Caco-2 (cell line): ENCODE measurements at regions of chr13 and their contacts with region 1.

Region 1: DNA sequence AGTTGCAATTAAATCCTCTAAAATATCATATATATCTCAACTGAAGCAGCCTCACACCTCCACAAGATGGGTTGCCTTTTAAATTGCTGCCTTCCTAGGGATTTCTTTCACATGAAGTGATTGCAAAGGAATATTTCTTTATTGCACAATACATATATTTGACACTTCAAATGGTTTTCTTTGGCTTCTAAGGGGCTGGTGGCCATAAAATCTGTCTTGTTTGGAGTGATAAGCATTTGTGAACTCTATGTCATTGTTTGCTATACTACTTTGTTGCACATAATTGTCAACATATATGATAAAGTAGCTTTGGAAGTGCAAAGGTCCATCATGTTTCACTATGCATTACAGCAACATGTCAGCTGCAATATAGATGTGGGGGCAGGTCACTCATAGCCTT is 2380.9 kb downstream of the PCDH9 start:
- DNase-seq: peak; percentile 69 to 70
- H3K4me3 ChIP-seq: no peak overlapping the region
- H3K4me3 Mint-ChIP-seq: no peak overlapping the region
- H3K27ac Mint-ChIP-seq: no peak overlapping the region
- H3K4me1 ChIP-seq: peaks cover 32% of the 10 kb centered on the region
- H3K4me1 Mint-ChIP-seq: peaks cover 34% of the 10 kb centered on the region
- H3K27me3 ChIP-seq: no peaks in the 10 kb centered on the region
- H3K27me3 Mint-ChIP-seq: no peaks in the 10 kb centered on the region
- CTCF ChIP-seq: no peak

Region 2: GRCh38 chr13:64675299-64675818 is 173.8 kb before region 1 on chr13:
- CTCF ChIA-PET with region 1: no interaction called
- POLR2A ChIA-PET with region 1: no interaction called
- intact Hi-C with region 1: loop called (anchors 1 kb)
- DNase-seq: peak in 1 of 2 experiments; percentile 64
- H3K4me3 ChIP-seq: no peak overlapping the region
- H3K4me3 Mint-ChIP-seq: peak overlapping the region; percentile 65
- H3K27ac Mint-ChIP-seq: peak overlapping the region; percentile 94
- H3K4me1 ChIP-seq: peaks cover 21% of the 10 kb centered on the region
- H3K4me1 Mint-ChIP-seq: peaks cover 17% of the 10 kb centered on the region
- H3K27me3 ChIP-seq: no peaks in the 10 kb centered on the region
- H3K27me3 Mint-ChIP-seq: no peaks in the 10 kb centered on the region
- CTCF ChIP-seq: no peak

Region 3: GRCh38 chr13:64723724-64724123 is 125.5 kb before region 1 on chr13:
- CTCF ChIA-PET with region 1: no interaction called
- POLR2A ChIA-PET with region 1: no interaction called
- intact Hi-C with region 1: loop called (anchors 2 kb)
- DNase-seq: peak; percentile 65 to 70
- H3K4me3 ChIP-seq: no peak overlapping the region
- H3K4me3 Mint-ChIP-seq: peak overlapping the region; percentile 48
- H3K27ac Mint-ChIP-seq: peak overlapping the region; percentile 71
- H3K4me1 ChIP-seq: peaks cover 15% of the 10 kb centered on the region
- H3K4me1 Mint-ChIP-seq: peaks cover 29% of the 10 kb centered on the region
- H3K27me3 ChIP-seq: no peaks in the 10 kb centered on the region
- H3K27me3 Mint-ChIP-seq: no peaks in the 10 kb centered on the region
- CTCF ChIP-seq: no peak

Region 4: DNA sequence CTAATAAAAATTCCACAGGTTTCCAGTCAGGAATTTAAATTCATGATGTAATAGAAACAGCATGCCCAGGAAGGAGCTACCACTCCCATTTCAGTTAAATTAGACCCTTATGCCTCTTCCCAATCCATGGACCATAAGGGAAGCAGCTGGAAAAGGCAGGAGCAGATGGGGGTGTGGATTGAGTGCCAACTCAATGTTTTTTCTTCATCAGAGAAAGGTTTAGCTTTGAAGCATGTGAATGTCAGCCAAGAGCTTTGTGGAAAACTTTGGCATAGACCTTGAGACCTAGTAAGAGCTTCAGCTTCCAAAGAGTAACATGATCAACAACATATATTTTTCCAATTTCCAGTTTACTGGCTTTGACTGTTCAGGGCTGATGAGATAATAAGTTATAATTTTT is 241.0 kb after region 1 on chr13:
- CTCF ChIA-PET with region 1: no interaction called
- POLR2A ChIA-PET with region 1: no interaction called
- intact Hi-C with region 1: no loop called
- DNase-seq: no peak
- H3K4me3 ChIP-seq: no peak overlapping the region
- H3K4me3 Mint-ChIP-seq: no peak overlapping the region
- H3K27ac Mint-ChIP-seq: no peak overlapping the region
- H3K4me1 ChIP-seq: no peaks in the 10 kb centered on the region
- H3K4me1 Mint-ChIP-seq: peaks cover 7% of the 10 kb centered on the region
- H3K27me3 ChIP-seq: no peaks in the 10 kb centered on the region
- H3K27me3 Mint-ChIP-seq: no peaks in the 10 kb centered on the region
- CTCF ChIP-seq: no peak

Region 5: GRCh38 chr13:65112123-65113075 is 263.2 kb after region 1 on chr13:
- CTCF ChIA-PET with region 1: no interaction called
- POLR2A ChIA-PET with region 1: no interaction called
- intact Hi-C with region 1: loop called (anchors 1 kb)
- DNase-seq: no peak
- H3K4me3 ChIP-seq: no peak overlapping the region
- H3K4me3 Mint-ChIP-seq: no peak overlapping the region
- H3K27ac Mint-ChIP-seq: no peak overlapping the region
- H3K4me1 ChIP-seq: no peaks in the 10 kb centered on the region
- H3K4me1 Mint-ChIP-seq: peaks cover under 1% of the 10 kb centered on the region
- H3K27me3 ChIP-seq: no peaks in the 10 kb centered on the region
- H3K27me3 Mint-ChIP-seq: no peaks in the 10 kb centered on the region
- CTCF ChIP-seq: no peak